Activated CD8-positive, alpha-beta T cell treated with anti-CD3 and anti-CD28 coated beads, Interleukin-2, amount 10 ng/mL, durations not matched to agents 7 days and 5 days (primary cell): ENCODE measurements at regions of chr14 and their contacts with region 1.

Region 1: GRCh38 chr14:23631702-23632460 is 4.3 kb upstream of the DHRS2 start:
- DNase-seq: peak; percentile 74
- ATAC-seq: peak; percentile 82
- H3K4me3 Mint-ChIP-seq: peak overlapping the region; percentile 11
- H3K27ac Mint-ChIP-seq: peak overlapping the region; percentile 48
- H3K4me1 Mint-ChIP-seq: peaks cover 11% of the 10 kb centered on the region
- H3K27me3 Mint-ChIP-seq: peaks cover 11% of the 10 kb centered on the region

Region 2: GRCh38 chr14:23366426-23366921 is 265.4 kb before region 1 on chr14:
- CTCF ChIA-PET with region 1: no interaction called
- POLR2A ChIA-PET with region 1: no interaction called
- DNase-seq: no peak
- ATAC-seq: no peak
- H3K4me3 Mint-ChIP-seq: no peak overlapping the region
- H3K27ac Mint-ChIP-seq: no peak overlapping the region
- H3K4me1 Mint-ChIP-seq: peaks cover 8% of the 10 kb centered on the region
- H3K27me3 Mint-ChIP-seq: peaks cover 41% of the 10 kb centered on the region

Region 3: GRCh38 chr14:23582906-23583760 is 48.7 kb before region 1 on chr14:
- CTCF ChIA-PET with region 1: interaction called, 110 read pairs
- POLR2A ChIA-PET with region 1: no interaction called
- DNase-seq: peak; percentile 16
- ATAC-seq: no peak
- H3K4me3 Mint-ChIP-seq: no peak overlapping the region
- H3K27ac Mint-ChIP-seq: no peak overlapping the region
- H3K4me1 Mint-ChIP-seq: no peaks in the 10 kb centered on the region
- H3K27me3 Mint-ChIP-seq: peaks cover 40% of the 10 kb centered on the region

Region 4: GRCh38 chr14:23605931-23606585 is 25.8 kb before region 1 on chr14:
- CTCF ChIA-PET with region 1: interaction called, 197 read pairs
- POLR2A ChIA-PET with region 1: interaction called, 5 read pairs
- DNase-seq: no peak
- ATAC-seq: no peak
- H3K4me3 Mint-ChIP-seq: no peak overlapping the region
- H3K27ac Mint-ChIP-seq: peak overlapping the region; percentile 13
- H3K4me1 Mint-ChIP-seq: peaks cover 42% of the 10 kb centered on the region
- H3K27me3 Mint-ChIP-seq: no peaks in the 10 kb centered on the region

Region 5: GRCh38 chr14:23646648-23647549 is 15.0 kb after region 1 on chr14:
- CTCF ChIA-PET with region 1: interaction called, 34 read pairs
- POLR2A ChIA-PET with region 1: interaction called, 3 read pairs
- DNase-seq: no peak
- ATAC-seq: no peak
- H3K4me3 Mint-ChIP-seq: no peak overlapping the region
- H3K27ac Mint-ChIP-seq: no peak overlapping the region
- H3K4me1 Mint-ChIP-seq: no peaks in the 10 kb centered on the region
- H3K27me3 Mint-ChIP-seq: no peaks in the 10 kb centered on the region

Region 6: DNA sequence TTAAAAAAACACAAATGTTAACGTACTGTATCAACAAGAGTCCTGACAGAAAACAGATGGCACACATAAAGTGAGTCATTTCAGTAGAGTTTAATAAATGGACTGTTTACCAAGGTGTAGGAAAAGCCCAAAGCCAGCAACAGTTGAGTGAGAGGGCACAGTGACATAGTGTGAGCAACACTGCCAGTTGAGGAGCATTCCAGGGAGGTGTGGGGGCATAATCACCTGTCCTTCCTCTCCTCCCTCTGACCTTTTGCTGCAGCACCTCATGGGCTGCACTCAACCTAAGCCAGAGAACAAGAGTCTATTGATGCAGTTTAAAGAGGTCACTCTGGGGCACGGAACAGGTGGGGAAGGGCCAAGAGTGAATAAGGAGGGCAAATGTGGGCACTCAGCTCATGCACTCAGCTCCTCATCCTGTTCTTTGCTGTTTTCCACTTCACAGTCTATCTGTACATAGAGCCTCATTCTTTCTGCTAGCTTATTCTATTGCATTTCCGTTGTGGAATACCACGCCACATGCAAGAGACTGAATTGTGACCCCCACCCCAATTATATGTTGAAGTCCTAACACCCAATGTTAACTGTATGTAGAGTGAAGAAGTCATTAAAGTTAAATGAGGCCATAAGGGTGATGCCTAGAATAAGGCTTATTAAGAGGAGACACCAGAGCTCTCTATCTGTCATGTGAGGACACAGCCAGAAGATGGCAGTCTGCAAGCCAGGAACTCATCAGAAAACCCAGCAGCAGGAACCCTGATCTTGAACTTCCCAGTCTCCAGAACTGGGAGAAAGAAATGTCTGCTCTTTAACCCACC is 33.7 kb after region 1 on chr14:
- CTCF ChIA-PET with region 1: interaction called, 34 read pairs
- POLR2A ChIA-PET with region 1: no interaction called
- DNase-seq: peak; percentile 46
- ATAC-seq: no peak
- H3K4me3 Mint-ChIP-seq: no peak overlapping the region
- H3K27ac Mint-ChIP-seq: no peak overlapping the region
- H3K4me1 Mint-ChIP-seq: peaks cover 1% of the 10 kb centered on the region
- H3K27me3 Mint-ChIP-seq: peaks cover 11% of the 10 kb centered on the region

Region 7: DNA sequence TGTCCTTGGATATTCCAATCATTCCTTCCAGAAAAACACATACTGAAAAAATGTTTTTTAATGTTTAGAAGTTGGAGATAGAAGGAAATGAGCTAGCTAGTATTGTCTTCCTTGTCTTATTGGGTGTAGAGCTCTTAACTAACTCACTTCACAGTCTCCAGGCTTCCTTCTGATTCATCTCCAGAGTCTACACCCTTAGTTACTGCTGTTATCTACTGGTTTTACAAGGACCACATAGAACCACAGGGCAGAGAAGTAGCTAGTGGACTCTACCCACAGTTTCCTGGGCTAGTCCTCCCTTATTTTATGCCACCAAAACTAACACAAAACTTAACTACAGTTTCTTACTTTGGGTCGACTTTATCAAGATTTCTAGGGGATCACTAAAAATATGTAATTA is 290.7 kb after region 1 on chr14:
- CTCF ChIA-PET with region 1: interaction called, 13 read pairs
- POLR2A ChIA-PET with region 1: no interaction called
- DNase-seq: no peak
- ATAC-seq: no peak
- H3K4me3 Mint-ChIP-seq: no peak overlapping the region
- H3K27ac Mint-ChIP-seq: no peak overlapping the region
- H3K4me1 Mint-ChIP-seq: no peaks in the 10 kb centered on the region
- H3K27me3 Mint-ChIP-seq: no peaks in the 10 kb centered on the region